Psoas muscle (tissue), 8 donors: ENCODE measurements at regions of chr6 and their contacts with region 1.

Region 1: GRCh38 chr6:158220786-158221442 is 52.8 kb downstream of the GTF2H5 start:
- DNase-seq: peak; percentile 79 to 87
- ATAC-seq: peak; percentile 92 to 100 (median 98)
- H3K4me3 ChIP-seq: no peak overlapping the region
- H3K27ac ChIP-seq: no peak overlapping the region
- H3K4me1 ChIP-seq: no peaks in the 10 kb centered on the region
- H3K27me3 ChIP-seq: no peaks in the 10 kb centered on the region
- CTCF ChIP-seq: peak; percentile 97

Region 2: DNA sequence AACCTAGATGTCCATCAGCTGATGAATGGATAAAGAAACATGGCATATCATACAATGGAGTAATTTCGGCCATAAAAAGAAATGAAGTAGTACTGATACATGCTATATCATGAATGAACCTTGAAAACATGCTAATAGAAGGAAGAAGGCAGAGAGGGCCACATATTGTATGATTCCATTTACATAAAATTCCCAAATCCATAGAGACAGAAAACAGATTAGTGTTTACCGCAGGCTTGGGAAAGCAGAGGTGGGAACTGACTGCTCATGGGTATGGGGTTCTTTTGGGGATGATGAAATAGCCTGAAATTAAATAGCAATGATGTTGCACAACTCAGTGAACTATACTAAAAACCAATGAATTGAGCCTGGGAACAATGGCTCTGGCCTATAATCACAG is 111.2 kb before region 1 on chr6:
- intact Hi-C with region 1: no loop called
- DNase-seq: no peak
- ATAC-seq: no peak
- H3K4me3 ChIP-seq: no peak overlapping the region
- H3K27ac ChIP-seq: no peak overlapping the region
- H3K4me1 ChIP-seq: no peaks in the 10 kb centered on the region
- H3K27me3 ChIP-seq: no peaks in the 10 kb centered on the region
- CTCF ChIP-seq: no peak

Region 3: DNA sequence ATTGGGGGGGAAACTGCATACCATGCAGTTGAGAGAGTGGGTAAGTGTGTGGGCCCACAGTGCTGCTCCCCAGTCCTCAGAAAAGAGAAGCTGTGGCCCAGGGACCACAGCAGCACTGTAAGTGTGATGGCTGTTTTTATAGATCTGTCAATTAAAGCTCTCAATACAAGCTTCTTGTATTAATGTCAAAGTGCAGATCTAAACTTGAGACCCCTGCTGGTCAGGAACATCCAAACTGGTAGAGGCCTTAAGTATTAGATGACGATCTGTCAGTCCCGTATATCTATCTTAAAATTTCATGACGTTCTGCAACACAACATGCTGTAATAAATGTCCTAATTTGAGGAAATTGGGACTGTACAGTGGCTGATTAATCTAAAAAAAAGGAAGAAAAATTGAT is 166.1 kb after region 1 on chr6:
- intact Hi-C with region 1: loop called in 1 of 2 experiments (anchors 10 kb)
- DNase-seq: no peak
- ATAC-seq: no peak
- H3K4me3 ChIP-seq: no peak overlapping the region
- H3K27ac ChIP-seq: no peak overlapping the region
- H3K4me1 ChIP-seq: peaks cover 24% of the 10 kb centered on the region
- H3K27me3 ChIP-seq: no peaks in the 10 kb centered on the region
- CTCF ChIP-seq: peak; percentile 4

Region 4: DNA sequence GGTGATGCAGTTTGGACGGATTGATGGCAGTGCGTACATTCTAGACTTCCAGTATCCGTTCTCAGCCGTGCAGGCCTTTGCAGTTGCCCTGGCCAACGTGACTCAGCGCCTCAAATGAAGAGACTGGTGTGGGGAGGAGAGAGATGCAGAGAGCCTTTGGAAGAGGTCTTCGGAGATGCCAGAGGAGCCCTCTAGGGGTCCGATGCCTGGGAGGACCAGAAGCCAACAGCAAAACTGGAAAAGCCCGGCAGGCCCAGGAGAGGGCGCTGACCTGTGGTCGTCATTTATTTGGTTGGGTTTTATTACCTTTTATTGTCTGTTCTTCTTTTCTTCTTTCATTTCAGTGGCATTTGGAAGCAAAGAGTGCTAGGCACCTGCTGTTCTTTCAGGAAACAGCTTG is 285.7 kb after region 1 on chr6:
- intact Hi-C with region 1: loop called in 1 of 2 experiments (anchors 10 kb)
- DNase-seq: no peak
- ATAC-seq: no peak
- H3K4me3 ChIP-seq: no peak overlapping the region
- H3K27ac ChIP-seq: no peak overlapping the region
- H3K4me1 ChIP-seq: no peaks in the 10 kb centered on the region
- H3K27me3 ChIP-seq: no peaks in the 10 kb centered on the region
- CTCF ChIP-seq: no peak

Region 5: GRCh38 chr6:158518191-158519127 is 297.5 kb after region 1 on chr6:
- intact Hi-C with region 1: loop called in 1 of 2 experiments (anchors 2 kb)
- DNase-seq: peak in 1 of 2 donors; percentile 32
- ATAC-seq: peak in 3 of 4 donors; percentile 70 to 84 (median 71)
- H3K4me3 ChIP-seq: peak overlapping the region; percentile 12
- H3K27ac ChIP-seq: no peak overlapping the region
- H3K4me1 ChIP-seq: peaks cover 4% of the 10 kb centered on the region
- H3K27me3 ChIP-seq: peaks cover 0 to 46% (median 4%) of the 10 kb centered on the region in 3 donors
- CTCF ChIP-seq: peak; percentile 32

Region 6: GRCh38 chr6:158605266-158605878 is 384.5 kb after region 1 on chr6:
- intact Hi-C with region 1: loop called (anchors 2 to 5 kb)
- DNase-seq: no peak
- ATAC-seq: peak; percentile 68 to 77 (median 74)
- H3K4me3 ChIP-seq: no peak overlapping the region
- H3K27ac ChIP-seq: no peak overlapping the region
- H3K4me1 ChIP-seq: no peaks in the 10 kb centered on the region
- H3K27me3 ChIP-seq: no peaks in the 10 kb centered on the region
- CTCF ChIP-seq: peak; percentile 73

Region 7: GRCh38 chr6:158686791-158687381 is 466.0 kb after region 1 on chr6:
- intact Hi-C with region 1: loop called in 1 of 2 experiments (anchors 2 kb)
- DNase-seq: no peak
- ATAC-seq: no peak
- H3K4me3 ChIP-seq: no peak overlapping the region
- H3K27ac ChIP-seq: no peak overlapping the region
- H3K4me1 ChIP-seq: peaks cover 8% of the 10 kb centered on the region
- H3K27me3 ChIP-seq: no peaks in the 10 kb centered on the region
- CTCF ChIP-seq: no peak